HEK293 (cell line): ENCODE measurements at regions of chr16 and their contacts with region 1.

Region 1: GRCh38 chr16:84672276-84673202 is 24.2 kb downstream of the KLHL36 start:
- H3K4me3 ChIP-seq: no peak overlapping the region
- H3K27ac ChIP-seq: no peak overlapping the region
- H3K4me1 ChIP-seq: no peaks in the 10 kb centered on the region
- CTCF ChIP-seq: peak; percentile 70

Region 2: GRCh38 chr16:84647828-84648594 is 24.5 kb before region 1 on chr16 and contains the start of gene KLHL36:
- CTCF ChIA-PET with region 1: interaction called, 13 read pairs
- POLR2A ChIA-PET with region 1: no interaction called
- H3K4me3 ChIP-seq: peak within 1 kb of the TSS; percentile 56
- H3K27ac ChIP-seq: no peak within 1 kb of the TSS; the same call in 1 of the 2 replicates
- H3K4me1 ChIP-seq: no peaks in the 10 kb centered on the region
- CTCF ChIP-seq: peak; percentile 46

Region 3: GRCh38 chr16:84687715-84688114 is 15.2 kb after region 1 on chr16:
- CTCF ChIA-PET with region 1: interaction called, 21 read pairs
- POLR2A ChIA-PET with region 1: interaction called, 4 read pairs
- H3K4me3 ChIP-seq: no peak overlapping the region
- H3K27ac ChIP-seq: no peak overlapping the region
- H3K4me1 ChIP-seq: no peaks in the 10 kb centered on the region
- CTCF ChIP-seq: no peak

Region 4: GRCh38 chr16:84738255-84739038 is 65.9 kb after region 1 on chr16:
- CTCF ChIA-PET with region 1: interaction called, 12 read pairs
- POLR2A ChIA-PET with region 1: no interaction called
- H3K4me3 ChIP-seq: no peak overlapping the region
- H3K27ac ChIP-seq: no peak overlapping the region
- H3K4me1 ChIP-seq: peaks cover 10% of the 10 kb centered on the region
- CTCF ChIP-seq: peak; percentile 73